ENCODE measurements at regions of chr21 and their contacts with region 1.

Region 1: DNA sequence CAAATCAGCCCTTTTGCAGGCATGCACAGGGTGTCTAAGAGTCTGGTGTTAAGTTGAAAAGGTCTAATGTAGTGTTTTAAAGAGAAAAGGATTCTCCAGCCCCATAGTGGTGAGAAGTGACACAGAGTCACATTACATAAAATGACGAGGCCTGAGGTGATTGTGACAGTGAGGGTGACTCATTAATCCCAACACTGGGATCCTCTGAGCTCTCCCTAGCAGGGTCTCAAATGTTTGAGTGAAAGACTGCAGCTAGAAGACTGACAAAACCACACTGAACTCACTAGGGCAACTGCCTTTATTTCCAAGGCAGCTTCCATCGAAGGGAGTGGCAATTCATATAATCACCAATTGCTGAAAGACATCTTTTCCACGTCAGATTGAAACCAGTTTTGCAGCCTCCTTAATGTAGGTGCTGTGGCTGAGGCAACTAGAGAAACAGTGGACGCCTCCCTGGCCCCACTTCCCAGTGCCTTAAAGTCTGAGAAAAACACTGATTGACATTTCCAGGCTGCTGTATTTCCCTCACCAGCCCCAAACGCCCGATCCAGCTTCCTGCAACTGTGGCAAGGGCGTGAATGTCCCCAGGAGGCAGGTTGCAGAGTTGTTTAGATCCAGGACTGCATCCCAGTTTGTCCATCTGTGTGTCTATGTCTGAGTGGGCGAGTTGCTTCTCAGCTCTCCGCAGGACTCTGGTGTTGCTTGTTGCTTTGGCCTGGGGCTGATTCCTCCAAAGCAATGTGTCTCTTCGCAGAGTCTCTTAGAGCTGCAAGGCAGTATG is 81.4 kb downstream of the RUNX1 start:
- DNase-seq: peak; percentile 73
- ATAC-seq: peak; percentile 70
- H3K4me3 Mint-ChIP-seq: peak overlapping the region; percentile 61
- H3K27ac Mint-ChIP-seq: peak overlapping the region; percentile 99
- H3K4me1 Mint-ChIP-seq: peaks cover 91% of the 10 kb centered on the region
- H3K27me3 Mint-ChIP-seq: no peaks in the 10 kb centered on the region

Region 2: DNA sequence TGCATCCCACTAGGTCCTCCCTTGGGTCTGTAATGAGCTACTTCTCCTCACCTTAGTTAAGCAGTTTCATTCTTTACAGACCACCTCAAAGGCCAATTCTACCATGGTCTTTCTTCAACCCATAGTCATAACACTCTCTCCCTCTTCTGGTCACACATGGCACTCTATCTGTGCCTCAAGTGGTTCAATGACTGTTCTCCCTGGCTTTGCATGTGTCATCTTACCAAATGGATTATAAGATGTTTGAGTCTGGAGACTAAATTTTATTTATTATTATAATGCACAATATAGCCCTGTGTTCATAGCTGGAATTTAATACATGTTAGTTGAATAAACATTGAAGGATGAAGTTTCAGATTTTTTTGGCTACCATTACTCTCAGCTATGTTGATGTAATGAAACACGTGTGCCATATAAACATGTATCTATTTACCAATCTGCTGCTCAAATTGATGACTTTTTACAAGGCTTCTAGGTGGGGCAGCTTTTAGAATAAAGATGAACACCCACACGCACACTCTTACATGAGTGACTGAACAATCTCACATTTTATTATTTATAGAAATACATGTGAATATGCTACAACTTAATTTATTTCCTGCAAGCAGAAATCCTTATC is 20.7 kb before region 1 on chr21:
- CTCF ChIA-PET with region 1: interaction called, 13 read pairs
- POLR2A ChIA-PET with region 1: interaction called, 16 read pairs
- intact Hi-C with region 1: loop called (anchors 1 to 2 kb)
- DNase-seq: no peak
- ATAC-seq: peak; percentile 65
- H3K4me3 Mint-ChIP-seq: peak overlapping the region; percentile 13
- H3K27ac Mint-ChIP-seq: peak overlapping the region; percentile 95
- H3K4me1 Mint-ChIP-seq: peaks cover 92% of the 10 kb centered on the region
- H3K27me3 Mint-ChIP-seq: no peaks in the 10 kb centered on the region

Region 3: GRCh38 chr21:35020902-35021301 is 53.2 kb after region 1 on chr21:
- CTCF ChIA-PET with region 1: interaction called, 4 read pairs
- POLR2A ChIA-PET with region 1: interaction called, 3 read pairs
- intact Hi-C with region 1: loop called (anchors 1 to 2 kb)
- DNase-seq: peak; percentile 47
- ATAC-seq: peak; percentile 31
- H3K4me3 Mint-ChIP-seq: no peak overlapping the region
- H3K27ac Mint-ChIP-seq: peak overlapping the region; percentile 78
- H3K4me1 Mint-ChIP-seq: peaks cover 90% of the 10 kb centered on the region
- H3K27me3 Mint-ChIP-seq: no peaks in the 10 kb centered on the region

Region 4: GRCh38 chr21:35045542-35046262 is 78.0 kb after region 1 on chr21:
- CTCF ChIA-PET with region 1: interaction called, 5 read pairs
- POLR2A ChIA-PET with region 1: interaction called, 8 read pairs
- intact Hi-C with region 1: loop called (anchors 1 kb)
- DNase-seq: peak; percentile 64
- ATAC-seq: no peak
- H3K4me3 Mint-ChIP-seq: peak overlapping the region; percentile 87
- H3K27ac Mint-ChIP-seq: peak overlapping the region; percentile 95
- H3K4me1 Mint-ChIP-seq: peaks cover 79% of the 10 kb centered on the region
- H3K27me3 Mint-ChIP-seq: no peaks in the 10 kb centered on the region

Region 5: GRCh38 chr21:35342440-35342839 is 374.7 kb after region 1 on chr21:
- CTCF ChIA-PET with region 1: no interaction called
- POLR2A ChIA-PET with region 1: no interaction called
- intact Hi-C with region 1: loop called in 1 of 2 experiments (anchors 1 kb)
- DNase-seq: peak; percentile 55
- ATAC-seq: peak; percentile 78
- H3K4me3 Mint-ChIP-seq: peak overlapping the region; percentile 59
- H3K27ac Mint-ChIP-seq: peak overlapping the region; percentile 94
- H3K4me1 Mint-ChIP-seq: peaks cover 39% of the 10 kb centered on the region
- H3K27me3 Mint-ChIP-seq: peaks cover 1% of the 10 kb centered on the region